ENCODE measurements at regions of chr19 and their contacts with region 1.

Region 1: DNA sequence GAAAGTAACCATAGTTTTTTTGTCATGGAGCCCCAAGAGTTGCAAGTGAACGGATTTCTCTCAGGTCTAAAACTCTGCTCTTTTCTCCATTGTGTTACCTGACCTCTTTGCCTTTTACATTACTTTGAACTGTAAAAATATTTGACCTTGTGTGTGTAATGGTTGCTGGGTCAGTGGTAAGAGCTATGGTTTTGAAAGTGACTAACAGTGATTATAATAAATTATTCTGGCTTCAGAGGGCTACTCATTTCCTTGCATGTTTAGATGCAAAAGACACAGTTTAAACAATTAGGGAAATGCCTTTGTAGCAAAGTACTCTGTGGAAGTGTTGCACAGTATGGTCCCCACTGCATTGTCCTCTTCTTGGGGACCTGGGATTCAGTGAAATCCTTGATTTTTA is 29.3 kb upstream of the PSG8 start:
- H3K4me3 ChIP-seq: no peak overlapping the region
- H3K27ac ChIP-seq: no peak overlapping the region
- H3K4me1 ChIP-seq: no peaks in the 10 kb centered on the region
- CTCF ChIP-seq: no peak

Region 2: DNA sequence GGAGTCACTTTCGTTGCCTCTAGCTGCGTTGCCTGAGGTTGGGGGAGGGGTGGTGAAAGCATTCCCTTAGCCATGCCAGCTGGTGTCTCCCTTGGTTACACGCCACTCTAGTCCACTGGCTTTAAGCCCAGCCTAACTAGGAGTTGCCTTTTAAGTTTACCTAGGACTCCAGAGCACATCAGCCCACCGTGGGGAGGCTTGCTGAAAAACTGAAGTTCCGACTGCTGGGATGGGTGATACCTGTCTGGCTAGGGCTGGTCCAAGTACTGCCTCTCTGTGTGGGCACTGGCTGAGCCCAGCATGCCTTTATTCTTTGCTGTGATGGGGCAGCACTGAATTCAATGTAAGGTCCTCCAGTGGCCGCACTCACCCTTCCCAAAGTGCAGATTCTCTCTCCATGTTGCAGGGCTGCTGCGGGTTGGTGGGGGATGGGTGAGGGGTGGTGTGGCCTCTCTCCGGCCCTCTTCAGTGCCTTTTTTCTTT is 254.7 kb before region 1 on chr19:
- CTCF ChIA-PET with region 1: no interaction called
- POLR2A ChIA-PET with region 1: no interaction called
- H3K4me3 ChIP-seq: no peak overlapping the region
- H3K27ac ChIP-seq: no peak overlapping the region
- H3K4me1 ChIP-seq: no peaks in the 10 kb centered on the region
- CTCF ChIP-seq: no peak

Region 3: GRCh38 chr19:42628411-42629140 is 166.2 kb before region 1 on chr19:
- CTCF ChIA-PET with region 1: no interaction called
- POLR2A ChIA-PET with region 1: no interaction called
- H3K4me3 ChIP-seq: no peak overlapping the region
- H3K27ac ChIP-seq: no peak overlapping the region
- H3K4me1 ChIP-seq: no peaks in the 10 kb centered on the region; the same call in 1 of the 2 replicates
- CTCF ChIP-seq: no peak

Region 4: GRCh38 chr19:42693764-42694350 is 100.9 kb before region 1 on chr19:
- CTCF ChIA-PET with region 1: interaction called, 23 read pairs
- POLR2A ChIA-PET with region 1: no interaction called
- H3K4me3 ChIP-seq: no peak overlapping the region
- H3K27ac ChIP-seq: no peak overlapping the region
- H3K4me1 ChIP-seq: peaks cover 9% of the 10 kb centered on the region; the same call in 1 of the 2 replicates
- CTCF ChIP-seq: peak; percentile 70

Region 5: GRCh38 chr19:42857561-42857901 is 62.8 kb after region 1 on chr19:
- CTCF ChIA-PET with region 1: interaction called, 19 read pairs
- POLR2A ChIA-PET with region 1: no interaction called
- H3K4me3 ChIP-seq: no peak overlapping the region
- H3K27ac ChIP-seq: no peak overlapping the region
- H3K4me1 ChIP-seq: no peaks in the 10 kb centered on the region
- CTCF ChIP-seq: no peak

Region 6: DNA sequence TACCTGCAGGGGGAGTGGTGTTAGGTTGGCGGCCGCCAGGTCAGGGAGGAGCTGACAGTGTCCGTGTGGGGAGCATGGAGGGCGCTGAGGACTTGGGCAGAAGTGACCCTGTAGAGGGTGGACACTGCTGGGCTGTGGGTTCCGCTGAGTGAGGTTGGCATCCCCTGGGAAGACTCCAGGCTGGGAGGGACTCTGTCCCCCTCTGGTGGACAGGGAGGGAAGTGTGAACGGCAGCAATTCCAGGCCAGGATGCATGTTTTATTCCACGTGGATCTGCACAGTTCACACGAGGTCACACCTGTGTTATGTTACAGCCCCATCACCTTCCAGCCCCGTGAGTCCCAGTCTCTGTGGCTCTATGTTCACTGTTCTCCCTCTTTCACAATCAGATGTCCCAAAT is 86.5 kb after region 1 on chr19:
- CTCF ChIA-PET with region 1: interaction called, 54 read pairs
- POLR2A ChIA-PET with region 1: no interaction called
- H3K4me3 ChIP-seq: no peak overlapping the region
- H3K27ac ChIP-seq: no peak overlapping the region
- H3K4me1 ChIP-seq: no peaks in the 10 kb centered on the region
- CTCF ChIP-seq: no peak

Region 7: GRCh38 chr19:42919511-42920021 is 124.8 kb after region 1 on chr19:
- CTCF ChIA-PET with region 1: interaction called, 11 read pairs
- POLR2A ChIA-PET with region 1: no interaction called
- H3K4me3 ChIP-seq: no peak overlapping the region
- H3K27ac ChIP-seq: no peak overlapping the region
- H3K4me1 ChIP-seq: no peaks in the 10 kb centered on the region
- CTCF ChIP-seq: no peak

Region 8: DNA sequence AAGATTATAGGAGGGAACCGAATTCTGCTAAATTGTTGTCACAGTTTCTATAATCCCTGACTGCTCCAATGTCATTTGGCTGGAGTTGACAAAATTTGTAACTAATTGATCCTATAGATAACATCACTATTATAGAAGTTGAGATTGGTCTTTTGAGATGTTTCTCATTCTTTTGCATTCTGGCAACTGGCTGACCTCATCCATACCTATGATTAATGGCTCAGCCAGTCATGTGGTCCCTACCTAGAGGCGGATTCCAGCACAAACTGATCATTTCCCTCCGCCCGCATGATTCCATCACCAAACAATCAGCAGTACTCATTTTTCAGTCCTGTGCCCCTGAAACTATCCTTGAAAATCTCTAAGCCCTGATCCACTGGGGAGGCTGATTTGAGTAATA is 283.5 kb after region 1 on chr19:
- CTCF ChIA-PET with region 1: no interaction called
- POLR2A ChIA-PET with region 1: no interaction called
- H3K4me3 ChIP-seq: no peak overlapping the region
- H3K27ac ChIP-seq: no peak overlapping the region
- H3K4me1 ChIP-seq: no peaks in the 10 kb centered on the region
- CTCF ChIP-seq: no peak

Measured in HEK293 (cell line).